ENCODE measurements at regions of chr12 and their contacts with region 1.

Region 1: DNA sequence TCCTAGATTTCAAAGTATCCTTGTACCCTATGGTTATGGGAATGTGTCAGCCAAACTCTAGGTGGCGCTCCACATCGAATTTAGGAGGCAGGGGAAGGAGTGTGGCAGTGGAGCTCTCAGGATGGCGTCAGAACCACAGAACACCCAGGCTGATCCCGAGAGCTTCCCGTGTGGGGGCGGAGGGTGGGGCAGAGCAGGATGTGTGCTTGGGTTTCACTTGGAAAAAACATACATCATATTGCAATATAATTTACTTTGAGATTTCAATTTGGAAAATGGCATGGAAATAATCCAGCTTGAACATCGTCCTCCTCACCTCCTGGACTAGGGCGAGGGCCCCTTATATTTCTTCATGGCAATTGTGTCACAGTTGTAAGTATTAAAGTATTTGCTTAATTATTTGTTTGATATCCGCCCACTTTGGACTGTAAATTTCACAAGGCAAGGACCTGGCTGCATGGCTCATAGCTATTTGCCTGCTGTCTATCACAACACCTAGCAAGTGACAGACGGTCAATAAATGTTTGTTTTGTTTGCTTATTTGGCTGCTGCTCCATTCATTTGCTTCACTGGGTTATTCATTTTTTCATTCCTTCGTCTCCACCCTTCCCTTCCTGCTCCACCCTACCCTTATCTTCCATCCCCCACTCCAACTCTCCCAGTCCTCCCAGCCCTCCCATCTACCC is 221.5 kb upstream of the HMGA2 start:
- DNase-seq: peak; percentile 67
- H3K4me3 ChIP-seq: no peak overlapping the region
- H3K4me3 Mint-ChIP-seq: no peak overlapping the region
- H3K27ac Mint-ChIP-seq: no peak overlapping the region
- H3K4me1 ChIP-seq: peaks cover 19% of the 10 kb centered on the region
- H3K4me1 Mint-ChIP-seq: peaks cover 24% of the 10 kb centered on the region
- H3K27me3 ChIP-seq: no peaks in the 10 kb centered on the region
- H3K27me3 Mint-ChIP-seq: no peaks in the 10 kb centered on the region
- CTCF ChIP-seq: peak; percentile 65 to 67

Region 2: GRCh38 chr12:65656904-65657351 is 54.2 kb after region 1 on chr12:
- CTCF ChIA-PET with region 1: no interaction called
- POLR2A ChIA-PET with region 1: no interaction called
- intact Hi-C with region 1: no loop called
- DNase-seq: no peak
- H3K4me3 ChIP-seq: no peak overlapping the region
- H3K4me3 Mint-ChIP-seq: no peak overlapping the region
- H3K27ac Mint-ChIP-seq: no peak overlapping the region
- H3K4me1 ChIP-seq: no peaks in the 10 kb centered on the region
- H3K4me1 Mint-ChIP-seq: no peaks in the 10 kb centered on the region
- H3K27me3 ChIP-seq: no peaks in the 10 kb centered on the region
- H3K27me3 Mint-ChIP-seq: peaks cover 3% of the 10 kb centered on the region
- CTCF ChIP-seq: no peak

Region 3: GRCh38 chr12:65673732-65674131 is 71.0 kb after region 1 on chr12:
- CTCF ChIA-PET with region 1: no interaction called
- POLR2A ChIA-PET with region 1: no interaction called
- intact Hi-C with region 1: loop called (anchors 5 kb)
- DNase-seq: no peak
- H3K4me3 ChIP-seq: no peak overlapping the region
- H3K4me3 Mint-ChIP-seq: no peak overlapping the region
- H3K27ac Mint-ChIP-seq: no peak overlapping the region
- H3K4me1 ChIP-seq: no peaks in the 10 kb centered on the region
- H3K4me1 Mint-ChIP-seq: no peaks in the 10 kb centered on the region
- H3K27me3 ChIP-seq: no peaks in the 10 kb centered on the region
- H3K27me3 Mint-ChIP-seq: no peaks in the 10 kb centered on the region
- CTCF ChIP-seq: no peak

Region 4: DNA sequence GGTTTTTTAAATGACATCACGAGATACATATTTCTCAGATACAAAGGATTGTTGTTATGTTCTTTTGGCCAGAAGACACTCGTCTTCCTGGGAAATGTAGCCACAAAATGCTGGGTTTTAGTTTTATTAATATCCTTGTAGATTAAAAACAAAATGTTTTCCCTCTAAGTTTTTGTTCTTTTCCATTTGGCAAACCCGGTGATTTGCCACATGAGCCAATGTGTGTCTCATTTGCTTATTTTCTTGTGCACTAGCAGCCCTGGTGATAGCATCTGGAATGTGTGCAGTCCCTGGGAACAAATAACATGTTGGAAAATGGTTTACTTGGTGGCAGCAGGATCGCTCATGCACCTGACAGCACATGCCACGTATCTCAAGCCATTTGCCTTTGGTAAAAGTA is 282.6 kb after region 1 on chr12:
- CTCF ChIA-PET with region 1: no interaction called
- POLR2A ChIA-PET with region 1: no interaction called
- intact Hi-C with region 1: no loop called
- DNase-seq: no peak
- H3K4me3 ChIP-seq: no peak overlapping the region
- H3K4me3 Mint-ChIP-seq: no peak overlapping the region
- H3K27ac Mint-ChIP-seq: no peak overlapping the region
- H3K4me1 ChIP-seq: peaks cover 21% of the 10 kb centered on the region
- H3K4me1 Mint-ChIP-seq: peaks cover 8% of the 10 kb centered on the region
- H3K27me3 ChIP-seq: no peaks in the 10 kb centered on the region
- H3K27me3 Mint-ChIP-seq: no peaks in the 10 kb centered on the region
- CTCF ChIP-seq: no peak